ENCODE measurements at regions of chr2 and their contacts with region 1.

Region 1: GRCh38 chr2:11539317-11540152 is 5.7 kb downstream of the GREB1 start:
- DNase-seq: no peak
- ATAC-seq: peak; percentile 46

Region 2: DNA sequence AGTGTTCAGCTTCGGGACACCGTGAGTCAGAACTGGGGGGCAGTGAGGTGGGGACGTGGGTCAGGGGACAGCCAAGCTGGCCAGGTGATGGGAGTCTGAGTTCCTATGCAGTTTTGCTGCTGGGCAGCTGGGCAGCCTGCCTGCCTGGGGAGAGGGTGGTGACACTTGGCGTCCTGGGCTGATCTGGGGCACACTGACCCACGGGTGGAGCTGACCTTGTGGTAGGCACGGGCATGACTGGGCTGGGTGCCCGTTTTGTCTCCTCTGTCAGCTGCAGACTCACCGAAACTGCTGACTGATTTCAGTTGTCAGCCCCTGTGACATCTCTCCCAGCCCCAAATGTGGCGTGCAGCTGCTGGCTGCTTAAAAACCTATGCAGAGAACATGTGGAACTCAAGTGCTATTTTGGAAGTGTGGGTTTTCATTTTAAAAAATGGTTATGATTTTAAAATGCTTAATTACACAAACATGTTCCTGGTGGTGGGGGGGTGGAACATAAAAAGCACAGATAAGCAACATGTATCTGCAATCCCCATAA is 40.9 kb before region 1 on chr2:
- intact Hi-C with region 1: loop called (anchors 5 kb)
- DNase-seq: peak; percentile 92
- ATAC-seq: peak; percentile 93

Region 3: DNA sequence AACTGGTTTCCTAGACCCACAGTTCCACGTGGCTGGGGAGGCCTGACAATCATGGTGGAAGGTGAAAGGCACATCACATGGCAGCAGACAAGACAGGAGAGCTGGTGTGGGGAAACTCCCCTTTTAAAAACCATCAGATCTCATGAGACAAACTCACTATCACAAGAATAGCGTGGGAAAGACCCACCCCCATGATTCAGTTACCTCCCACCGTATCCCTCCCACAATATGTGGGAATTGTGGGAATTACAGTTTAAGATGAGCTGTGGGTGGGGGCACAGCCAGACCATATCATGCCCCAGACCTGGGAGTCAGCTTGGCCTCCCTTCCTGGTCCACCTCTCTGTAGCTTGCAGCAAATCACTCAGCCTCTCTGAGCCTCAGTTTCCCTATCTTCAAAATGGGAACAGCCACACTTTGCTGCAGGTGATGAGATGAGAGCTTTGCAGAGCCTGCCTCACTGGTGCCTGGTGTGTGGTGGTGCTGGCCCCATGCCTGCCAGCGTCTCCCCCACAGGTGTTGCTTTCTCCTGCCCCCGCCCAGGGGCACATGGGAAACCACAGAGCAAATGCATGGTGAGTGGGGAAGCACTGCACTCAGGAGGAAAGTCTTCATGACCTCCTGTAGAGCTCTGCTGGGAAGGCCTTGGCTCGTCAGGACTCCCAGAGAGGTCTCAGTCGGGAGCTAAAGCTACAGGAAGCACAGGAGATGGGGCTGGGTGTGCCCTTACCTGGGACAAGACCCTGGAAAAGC is 25.5 kb after region 1 on chr2:
- intact Hi-C with region 1: no loop called
- DNase-seq: no peak
- ATAC-seq: no peak